A549 (cell line): ENCODE measurements at regions of chr20 and their contacts with region 1.

Region 1: DNA sequence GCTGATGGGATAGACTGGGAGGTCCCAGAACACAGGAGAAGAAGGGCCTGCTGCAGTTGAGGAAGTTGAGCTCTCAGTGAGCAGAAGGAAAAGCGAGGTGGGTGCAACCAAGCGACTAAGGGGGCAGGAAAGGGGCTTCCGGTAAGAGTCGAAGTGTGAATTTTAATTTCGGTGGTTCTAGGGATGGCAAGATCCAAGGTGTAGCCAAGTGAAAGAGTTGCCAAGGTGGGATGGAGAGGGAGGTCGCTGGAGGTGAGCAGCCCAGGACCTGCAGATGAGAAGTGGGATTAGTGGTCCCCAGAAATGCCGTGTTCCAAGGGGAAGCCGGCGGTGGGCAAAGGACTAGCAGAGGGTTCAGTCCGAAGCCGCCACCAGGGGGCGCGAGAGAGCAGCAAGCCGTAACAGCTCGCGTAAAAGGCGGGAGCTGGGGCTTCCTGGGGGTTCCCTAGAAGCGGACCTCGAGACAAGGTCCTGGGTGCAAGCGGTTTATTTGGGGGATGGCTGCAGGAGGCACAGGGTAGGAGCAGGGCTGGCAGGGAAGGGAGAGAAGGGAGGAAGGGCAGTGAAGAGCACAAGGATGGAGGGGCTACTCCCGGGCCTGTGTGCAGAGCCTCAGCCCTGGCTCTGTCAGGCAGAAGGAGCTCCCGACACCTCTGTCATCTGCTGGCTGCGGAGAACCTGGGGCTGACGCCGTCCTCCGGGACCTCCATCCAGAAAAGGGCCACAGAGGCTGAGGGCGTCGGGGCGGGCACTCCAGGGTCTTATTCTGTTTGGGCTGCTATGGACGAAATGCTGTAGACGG is 103.6 kb downstream of the PAX1 start:
- DNase-seq: peak; percentile 29 to 66
- ATAC-seq: peak in 1 of 2 experiments; percentile 90; a peak in 3 of 6 replicates
- H3K4me3 ChIP-seq: no peak overlapping the region
- H3K27ac ChIP-seq: no peak overlapping the region
- H3K4me1 ChIP-seq: no peaks in the 10 kb centered on the region
- CTCF ChIP-seq: peak; percentile 69
- EP300 ChIP-seq: no peak
- POLR2A ChIP-seq: no peak
- RAD21 ChIP-seq: peak; percentile 49 to 54

Region 2: GRCh38 chr20:21795955-21796458 is 13.1 kb before region 1 on chr20:
- CTCF ChIA-PET with region 1: interaction called, 20 read pairs
- POLR2A ChIA-PET with region 1: no interaction called
- DNase-seq: peak in 1 of 2 experiments; percentile 13
- ATAC-seq: peak in 1 of 2 experiments; percentile 57; a peak in 1 of 6 replicates
- H3K4me3 ChIP-seq: no peak overlapping the region
- H3K27ac ChIP-seq: no peak overlapping the region
- H3K4me1 ChIP-seq: no peaks in the 10 kb centered on the region
- CTCF ChIP-seq: no peak; the same call in 2 of the 3 replicates
- EP300 ChIP-seq: no peak
- POLR2A ChIP-seq: no peak
- RAD21 ChIP-seq: no peak; a peak in 1 of 5 replicates

Region 3: DNA sequence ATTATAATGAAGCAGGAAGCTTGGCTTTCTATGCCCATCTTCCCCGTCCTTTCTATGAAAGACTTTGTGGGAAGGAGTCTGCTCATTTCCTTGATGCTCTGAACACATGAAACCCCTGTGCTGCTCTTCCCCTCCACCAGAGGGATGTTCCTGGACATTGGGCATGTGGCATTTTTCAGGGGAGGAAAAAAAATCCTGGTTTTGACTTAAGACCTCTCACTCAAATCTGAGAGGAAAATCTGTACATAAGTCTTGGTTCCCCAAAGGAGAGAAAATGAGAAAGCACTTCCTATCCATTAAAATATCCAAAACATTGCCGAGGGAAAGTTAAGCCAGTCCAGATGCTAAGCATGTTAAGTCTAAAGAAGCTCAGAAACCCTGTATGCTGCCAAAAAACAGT is 289.4 kb after region 1 on chr20:
- CTCF ChIA-PET with region 1: interaction called, 12 read pairs
- POLR2A ChIA-PET with region 1: no interaction called
- DNase-seq: no peak
- ATAC-seq: no peak
- H3K4me3 ChIP-seq: no peak overlapping the region
- H3K27ac ChIP-seq: no peak overlapping the region
- H3K4me1 ChIP-seq: no peaks in the 10 kb centered on the region
- CTCF ChIP-seq: no peak
- EP300 ChIP-seq: no peak
- POLR2A ChIP-seq: no peak
- RAD21 ChIP-seq: no peak

Region 4: DNA sequence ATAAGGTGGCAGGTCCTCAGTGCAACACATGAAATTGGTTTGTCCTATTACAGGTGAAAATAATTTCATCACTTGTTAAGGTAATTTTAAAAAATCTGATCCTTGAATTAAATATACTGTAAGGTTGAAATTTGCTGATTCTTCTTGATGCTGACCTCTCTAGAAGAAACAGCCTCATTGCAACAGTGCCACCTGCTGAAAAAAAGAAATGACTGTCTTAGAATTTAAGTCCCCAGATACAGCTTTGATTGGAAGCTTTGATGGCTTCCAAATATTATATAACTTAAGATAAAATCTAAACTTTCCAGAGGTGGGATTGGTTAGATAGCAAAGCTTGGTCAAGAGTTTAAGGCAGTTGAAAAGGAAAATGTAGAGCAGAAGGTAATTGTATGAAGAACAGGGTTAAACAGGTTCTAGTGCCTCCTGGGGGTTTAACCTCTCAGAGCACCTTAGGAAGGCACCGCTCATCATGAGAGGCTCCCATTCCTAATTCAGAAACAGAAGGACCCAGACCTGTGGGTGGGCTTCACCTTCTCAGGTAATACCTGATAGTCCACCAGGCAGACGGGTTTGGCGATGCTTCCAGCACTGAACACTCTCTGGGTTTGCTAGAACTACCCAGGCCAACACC is 297.4 kb after region 1 on chr20:
- CTCF ChIA-PET with region 1: interaction called, 12 read pairs
- POLR2A ChIA-PET with region 1: no interaction called
- DNase-seq: peak; percentile 10 to 66
- ATAC-seq: peak; percentile 66 to 77
- H3K4me3 ChIP-seq: no peak overlapping the region
- H3K27ac ChIP-seq: no peak overlapping the region
- H3K4me1 ChIP-seq: no peaks in the 10 kb centered on the region
- CTCF ChIP-seq: peak; percentile 67
- EP300 ChIP-seq: no peak
- POLR2A ChIP-seq: no peak
- RAD21 ChIP-seq: peak; percentile 71 to 72

Region 5: DNA sequence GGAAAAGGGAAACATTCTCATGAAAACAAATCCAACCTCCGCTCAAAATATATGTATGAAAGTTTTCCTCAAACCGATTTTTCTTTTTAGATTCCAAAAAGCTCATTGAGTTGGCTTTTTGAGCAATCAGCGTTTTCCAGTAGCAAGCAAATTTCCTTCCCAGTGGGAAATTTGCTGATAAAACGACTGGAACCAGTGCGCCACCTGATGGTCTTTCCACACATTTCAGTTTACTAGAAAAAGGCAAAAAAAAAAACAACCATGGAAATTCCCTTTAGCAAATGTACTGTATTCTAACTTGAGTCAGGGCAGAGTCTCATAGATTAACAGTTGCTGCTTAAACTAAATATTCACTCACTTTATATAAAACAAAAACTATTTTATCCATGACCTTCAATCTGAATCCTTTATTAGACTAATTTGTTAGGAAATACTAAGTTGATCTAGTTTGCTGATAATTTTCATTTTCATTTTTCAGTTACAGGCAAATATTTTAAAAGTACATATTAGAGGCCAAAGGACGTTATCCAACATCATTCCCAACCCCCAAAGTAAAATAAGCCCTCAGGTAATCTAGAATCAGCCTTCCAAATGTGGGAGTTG is 503.8 kb after region 1 on chr20:
- CTCF ChIA-PET with region 1: interaction called, 11 read pairs
- POLR2A ChIA-PET with region 1: interaction called, 3 read pairs
- DNase-seq: peak; percentile 56 to 63
- ATAC-seq: peak in 1 of 2 experiments; percentile 50; a peak in 3 of 6 replicates
- H3K4me3 ChIP-seq: no peak overlapping the region
- H3K27ac ChIP-seq: no peak overlapping the region
- H3K4me1 ChIP-seq: no peaks in the 10 kb centered on the region
- CTCF ChIP-seq: peak; percentile 87
- EP300 ChIP-seq: no peak
- POLR2A ChIP-seq: no peak
- RAD21 ChIP-seq: peak; percentile 73 to 84